MCF 10A (cell line): ENCODE measurements at regions of chr12 and their contacts with region 1.

Region 1: GRCh38 chr12:101759396-101760047 is 20.3 kb upstream of the SYCP3 start:
- DNase-seq: peak; percentile 61
- H3K4me3 Mint-ChIP-seq: no peak overlapping the region
- H3K27ac Mint-ChIP-seq: no peak overlapping the region
- H3K4me1 Mint-ChIP-seq: no peaks in the 10 kb centered on the region
- H3K27me3 Mint-ChIP-seq: no peaks in the 10 kb centered on the region
- CTCF ChIP-seq: peak; percentile 65

Region 2: GRCh38 chr12:101414533-101415119 is 344.9 kb before region 1 on chr12:
- CTCF ChIA-PET with region 1: interaction called, 11 read pairs
- POLR2A ChIA-PET with region 1: no interaction called
- intact Hi-C with region 1: loop called (anchors 1 kb)
- DNase-seq: peak; percentile 77
- H3K4me3 Mint-ChIP-seq: no peak overlapping the region
- H3K27ac Mint-ChIP-seq: no peak overlapping the region
- H3K4me1 Mint-ChIP-seq: no peaks in the 10 kb centered on the region
- H3K27me3 Mint-ChIP-seq: no peaks in the 10 kb centered on the region
- CTCF ChIP-seq: peak; percentile 46

Region 3: DNA sequence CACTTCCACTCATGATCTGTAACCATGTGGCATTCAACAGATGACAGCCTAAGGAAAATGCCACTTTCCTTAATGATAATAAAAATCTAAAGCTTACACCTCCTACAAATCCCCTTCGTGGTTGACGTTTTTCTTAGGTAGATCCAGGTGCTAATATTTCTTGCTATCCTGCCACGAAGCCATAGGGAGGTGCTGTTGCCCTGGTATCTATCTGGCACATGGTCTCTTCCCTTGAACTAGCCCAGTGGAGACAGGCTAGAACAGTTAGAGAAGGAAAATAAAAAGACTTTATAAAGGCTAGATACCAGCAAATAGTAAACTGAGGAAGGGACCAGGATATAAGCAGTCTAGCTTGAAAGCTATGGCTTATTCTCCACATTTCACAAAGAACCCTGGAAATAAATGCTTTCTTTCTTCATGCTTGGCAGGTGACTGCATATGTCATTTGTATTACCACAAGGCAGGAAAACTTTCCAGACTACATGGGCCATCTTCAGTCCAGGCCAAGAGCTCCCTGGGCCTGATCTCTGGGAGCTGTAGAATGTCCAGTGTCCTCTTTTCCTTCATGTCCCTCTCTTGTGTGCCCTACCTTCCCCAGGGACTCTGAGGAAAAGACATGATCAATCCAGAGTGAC is 269.1 kb before region 1 on chr12:
- CTCF ChIA-PET with region 1: interaction called, 4 read pairs
- POLR2A ChIA-PET with region 1: no interaction called
- intact Hi-C with region 1: loop called (anchors 2 kb)
- DNase-seq: peak; percentile 62
- H3K4me3 Mint-ChIP-seq: no peak overlapping the region
- H3K27ac Mint-ChIP-seq: no peak overlapping the region
- H3K4me1 Mint-ChIP-seq: no peaks in the 10 kb centered on the region
- H3K27me3 Mint-ChIP-seq: no peaks in the 10 kb centered on the region
- CTCF ChIP-seq: peak; percentile 38

Region 4: DNA sequence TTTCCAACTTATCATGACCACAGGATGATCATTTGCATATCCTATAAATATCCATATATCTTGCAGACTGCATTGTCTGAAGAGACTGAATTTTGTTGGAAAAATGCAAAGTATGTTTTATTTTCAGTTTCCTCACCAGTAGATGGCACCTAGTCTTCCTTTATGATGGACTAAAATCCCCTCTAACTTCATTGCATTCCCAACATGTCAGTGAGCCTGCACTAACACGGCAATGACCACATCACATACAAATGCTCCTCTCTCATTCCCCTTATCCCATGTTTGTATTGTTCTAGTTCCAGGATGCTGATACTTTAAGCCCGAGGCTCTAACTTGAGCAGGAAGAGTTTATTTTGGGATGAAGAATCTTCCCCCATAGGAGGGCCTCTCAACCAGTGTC is 189.5 kb before region 1 on chr12:
- CTCF ChIA-PET with region 1: interaction called, 8 read pairs
- POLR2A ChIA-PET with region 1: interaction called, 3 read pairs
- intact Hi-C with region 1: loop called (anchors 1 kb)
- DNase-seq: peak; percentile 41
- H3K4me3 Mint-ChIP-seq: no peak overlapping the region
- H3K27ac Mint-ChIP-seq: no peak overlapping the region
- H3K4me1 Mint-ChIP-seq: peaks cover 12% of the 10 kb centered on the region
- H3K27me3 Mint-ChIP-seq: no peaks in the 10 kb centered on the region
- CTCF ChIP-seq: peak; percentile 36

Region 5: DNA sequence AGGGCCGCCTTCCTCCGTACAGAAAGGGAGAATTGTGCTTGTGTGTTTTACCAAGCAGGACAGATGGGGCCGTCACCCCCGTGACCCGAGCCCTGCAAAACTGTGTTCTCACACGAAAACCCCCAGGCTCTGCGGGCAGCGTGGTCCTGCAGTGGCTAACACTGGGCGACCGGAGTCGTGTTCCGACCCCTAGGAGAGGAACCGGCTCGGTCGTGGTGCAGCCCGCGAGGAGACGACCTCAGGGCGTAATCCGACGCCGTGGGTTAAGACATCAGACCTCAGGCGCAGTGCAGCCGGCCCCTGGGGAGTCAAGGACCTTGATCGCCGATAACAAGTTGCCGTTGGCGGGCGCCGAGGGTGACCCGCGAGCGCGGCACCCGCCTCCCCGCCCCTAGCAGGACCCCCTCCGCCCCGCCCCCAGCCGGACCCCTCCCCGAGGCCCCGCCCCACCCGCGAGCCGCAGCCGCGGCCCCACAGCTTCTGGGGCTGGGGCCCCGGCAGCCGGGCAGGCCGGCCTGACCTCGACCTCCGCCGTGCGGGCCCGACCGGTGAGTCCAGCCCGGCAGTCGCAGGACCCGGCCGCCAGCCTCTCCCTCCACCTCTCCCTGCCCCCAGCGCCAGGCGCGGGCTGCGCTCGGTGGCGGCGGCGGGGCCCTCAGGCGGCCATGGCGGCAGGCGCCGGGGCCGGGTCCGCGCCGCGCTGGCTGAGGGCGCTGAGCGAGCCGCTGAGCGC is 62.2 kb before region 1 on chr12 and contains the start of gene CHPT1:
- CTCF ChIA-PET with region 1: interaction called, 4 read pairs
- POLR2A ChIA-PET with region 1: interaction called, 3 read pairs
- intact Hi-C with region 1: loop called (anchors 5 kb)
- DNase-seq: peak; percentile 52
- H3K4me3 Mint-ChIP-seq: peak within 1 kb of the TSS; percentile 91
- H3K27ac Mint-ChIP-seq: peak within 1 kb of the TSS; percentile 78
- H3K4me1 Mint-ChIP-seq: peaks cover 38% of the 10 kb centered on the region
- H3K27me3 Mint-ChIP-seq: no peaks in the 10 kb centered on the region
- CTCF ChIP-seq: no peak
- total RNA-seq, gene CHPT1: 28.1 and 33.5 TPM in 2 replicates